Heart right ventricle (tissue), 16 donors: ENCODE measurements at regions of chr9 and their contacts with region 1.

Region 1: DNA sequence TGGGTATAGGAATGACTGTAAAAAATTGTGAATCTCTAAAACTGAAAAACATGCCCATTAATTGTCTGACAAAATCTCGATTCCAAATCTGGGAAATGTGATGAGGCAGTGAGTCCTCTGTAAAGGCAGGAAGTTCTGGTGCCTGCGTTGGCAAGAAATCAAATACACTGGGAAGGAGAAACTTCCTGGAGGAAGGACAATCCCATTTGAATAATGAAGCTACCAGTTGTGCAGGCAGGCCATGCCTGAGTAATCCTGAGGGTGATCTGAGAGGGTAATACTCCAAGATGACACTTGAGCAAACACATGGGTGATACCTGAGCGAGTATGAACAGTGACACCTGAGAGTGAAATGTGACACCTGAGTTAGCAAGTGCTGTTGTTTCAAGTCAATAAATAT is 49.7 kb downstream of the KIF24 start:
- DNase-seq: no peak
- ATAC-seq: peak in 1 of 8 donors; percentile 18
- H3K4me3 ChIP-seq: no peak overlapping the region
- H3K27ac ChIP-seq: peak overlapping the region in 1 of 10 donors; percentile 29
- H3K4me1 ChIP-seq: peaks cover 0 to 8% (median 0%) of the 10 kb centered on the region in 9 donors
- H3K27me3 ChIP-seq: no peaks in the 10 kb centered on the region
- CTCF ChIP-seq: no peak

Region 2: GRCh38 chr9:34218446-34218845 is 61.0 kb before region 1 on chr9:
- intact Hi-C with region 1: no loop called
- DNase-seq: no peak
- ATAC-seq: no peak
- H3K4me3 ChIP-seq: no peak overlapping the region
- H3K27ac ChIP-seq: no peak overlapping the region
- H3K4me1 ChIP-seq: peaks cover 0 to 27% (median 8%) of the 10 kb centered on the region in 9 donors
- H3K27me3 ChIP-seq: no peaks in the 10 kb centered on the region
- CTCF ChIP-seq: no peak

Region 3: GRCh38 chr9:34292552-34292951 is 13.1 kb after region 1 on chr9:
- intact Hi-C with region 1: loop called in 1 of 10 experiments (anchors 1 kb)
- DNase-seq: no peak
- ATAC-seq: no peak
- H3K4me3 ChIP-seq: no peak overlapping the region
- H3K27ac ChIP-seq: no peak overlapping the region
- H3K4me1 ChIP-seq: peaks cover 0 to 16% (median 0%) of the 10 kb centered on the region in 9 donors
- H3K27me3 ChIP-seq: no peaks in the 10 kb centered on the region
- CTCF ChIP-seq: no peak

Region 4: GRCh38 chr9:35716230-35716629 is 1436.8 kb after region 1 on chr9:
- intact Hi-C with region 1: no loop called
- DNase-seq: no peak
- ATAC-seq: peak in 1 of 8 donors; percentile 14
- H3K4me3 ChIP-seq: no peak overlapping the region
- H3K27ac ChIP-seq: no peak overlapping the region
- H3K4me1 ChIP-seq: no peaks in the 10 kb centered on the region
- H3K27me3 ChIP-seq: no peaks in the 10 kb centered on the region
- CTCF ChIP-seq: no peak